ENCODE measurements at regions of chr15 and their contacts with region 1.

Region 1: DNA sequence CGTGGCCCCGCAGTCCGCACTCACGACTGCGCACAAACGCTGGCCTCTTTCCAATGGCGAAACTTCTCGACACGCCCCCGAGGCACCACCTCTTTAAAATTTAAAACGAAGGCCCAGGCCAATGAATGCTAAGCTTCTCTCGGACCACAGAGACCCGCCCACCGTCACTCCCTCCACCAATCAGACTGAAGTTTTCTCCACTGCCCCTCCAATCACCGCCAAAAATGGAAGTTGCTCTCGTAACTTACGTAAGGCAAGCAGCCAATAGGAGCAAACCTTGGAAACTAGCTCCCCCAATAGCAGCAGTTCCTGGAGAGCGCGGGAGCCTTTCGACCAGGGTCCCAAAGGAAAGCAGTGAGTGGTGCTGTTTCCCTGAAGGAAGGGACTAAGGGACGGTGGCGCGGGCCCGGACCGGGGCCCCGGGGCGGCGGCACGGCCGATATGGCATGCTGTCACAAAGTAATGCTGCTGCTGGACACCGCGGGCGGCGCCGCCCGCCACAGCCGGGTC is at the start of gene TICRR:
- DNase-seq: peak; percentile 86 to 98 (median 91)
- ATAC-seq: peak; percentile 98
- H3K4me3 ChIP-seq: peak within 1 kb of the TSS; percentile 68
- H3K4me3 Mint-ChIP-seq: peak within 1 kb of the TSS; percentile 91
- H3K27ac ChIP-seq: no peak within 1 kb of the TSS
- H3K27ac Mint-ChIP-seq: peak within 1 kb of the TSS; percentile 43
- H3K4me1 ChIP-seq: peaks cover 17% of the 10 kb centered on the region
- H3K4me1 Mint-ChIP-seq: peaks cover 5% of the 10 kb centered on the region
- H3K27me3 ChIP-seq: no peaks in the 10 kb centered on the region
- H3K27me3 Mint-ChIP-seq: peaks cover 11% of the 10 kb centered on the region
- CTCF ChIP-seq: no peak
- total RNA-seq, gene TICRR: 0.05 to 0.06 TPM

Region 2: DNA sequence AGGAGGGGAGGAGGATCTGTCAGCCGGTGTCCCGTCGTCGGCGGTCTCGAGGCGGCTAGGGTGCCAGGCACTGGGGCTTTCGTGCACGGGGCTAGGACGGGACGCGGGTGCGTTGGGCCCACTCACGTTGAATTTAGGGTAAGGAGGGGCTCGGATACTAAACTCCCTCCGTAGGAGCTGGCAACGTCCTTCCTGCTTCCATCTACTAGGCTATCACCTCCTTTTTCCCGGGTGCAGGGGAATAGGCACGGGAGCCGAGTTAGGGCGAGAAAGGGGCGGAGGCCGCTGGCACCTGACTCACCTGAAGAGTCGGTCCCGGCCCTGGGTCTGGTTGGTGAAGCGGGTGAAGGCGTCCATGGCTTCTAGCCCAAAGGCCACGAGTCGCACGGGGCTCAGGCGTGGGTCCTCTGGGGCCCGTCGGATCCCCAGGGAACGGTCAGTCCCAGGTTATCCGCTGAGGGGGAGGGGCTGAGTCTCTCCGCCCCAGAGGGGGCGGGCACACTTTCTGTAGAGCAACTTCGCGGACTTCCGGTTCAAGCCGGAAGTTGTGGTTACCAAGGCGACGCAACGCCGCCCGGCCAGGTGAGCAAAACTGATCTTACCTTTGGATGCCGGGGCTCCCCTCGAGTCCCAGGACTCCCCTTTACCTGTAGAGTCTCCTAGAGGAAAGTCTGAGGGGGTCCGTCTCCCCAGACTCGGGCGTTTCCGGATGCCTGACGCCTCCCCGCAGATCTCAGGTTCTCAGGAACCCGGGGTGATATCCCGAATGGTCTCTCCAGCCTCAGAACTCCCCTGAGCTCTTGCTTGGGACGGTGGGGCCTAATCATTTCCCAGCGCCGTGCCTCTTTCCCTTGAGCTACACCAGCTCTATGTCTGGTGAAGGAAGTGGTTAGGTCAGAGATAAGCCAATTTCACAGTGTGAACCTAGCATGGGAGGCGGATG is 115.3 kb after region 1 on chr15 and contains the starts of genes PEX11A and WDR93:
- CTCF ChIA-PET with region 1: no interaction called
- POLR2A ChIA-PET with region 1: no interaction called
- intact Hi-C with region 1: loop called in 1 of 2 experiments (anchors 5 kb)
- DNase-seq: peak; percentile 58 to 89 (median 71)
- ATAC-seq: peak; percentile 82
- H3K4me3 ChIP-seq: peak within 1 kb of the TSS; percentile 98
- H3K4me3 Mint-ChIP-seq: peak within 1 kb of the TSS; percentile 90
- H3K27ac ChIP-seq: peak within 1 kb of the TSS in 1 of 2 donors; percentile 63
- H3K27ac Mint-ChIP-seq: peak within 1 kb of the TSS; percentile 73
- H3K4me1 ChIP-seq: peaks cover 17% of the 10 kb centered on the region
- H3K4me1 Mint-ChIP-seq: peaks cover 6% of the 10 kb centered on the region
- H3K27me3 ChIP-seq: no peaks in the 10 kb centered on the region
- H3K27me3 Mint-ChIP-seq: peaks cover 5% of the 10 kb centered on the region
- CTCF ChIP-seq: no peak
- total RNA-seq, gene PEX11A: 0.22 TPM
- total RNA-seq, gene WDR93: not detected

Region 3: DNA sequence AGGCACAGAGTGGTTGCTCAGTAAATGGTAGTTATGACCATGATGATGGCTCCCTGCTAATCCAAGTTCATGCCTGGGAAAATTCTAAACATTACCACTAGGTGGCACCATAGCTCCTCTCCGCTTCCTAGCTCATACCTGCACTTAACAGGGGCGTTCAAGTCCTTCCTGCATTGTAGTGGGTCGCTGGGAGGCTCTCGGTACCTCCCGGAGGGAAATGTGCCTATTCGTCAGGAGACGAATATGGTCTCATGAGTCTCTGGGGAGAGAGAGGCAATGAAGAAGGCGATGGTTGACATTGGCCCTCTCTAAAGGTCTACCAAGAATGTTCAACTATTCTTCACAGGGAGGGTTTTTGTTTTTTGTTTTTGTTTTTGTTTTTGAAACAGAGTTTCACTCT is 164.9 kb after region 1 on chr15:
- CTCF ChIA-PET with region 1: no interaction called
- POLR2A ChIA-PET with region 1: no interaction called
- intact Hi-C with region 1: no loop called
- DNase-seq: peak in 13 of 14 experiments; percentile 15 to 82 (median 44)
- ATAC-seq: peak; percentile 86
- H3K4me3 ChIP-seq: no peak overlapping the region
- H3K4me3 Mint-ChIP-seq: no peak overlapping the region
- H3K27ac ChIP-seq: no peak overlapping the region
- H3K27ac Mint-ChIP-seq: no peak overlapping the region
- H3K4me1 ChIP-seq: peaks cover 3% of the 10 kb centered on the region
- H3K4me1 Mint-ChIP-seq: no peaks in the 10 kb centered on the region
- H3K27me3 ChIP-seq: peaks cover 0 to 6% of the 10 kb centered on the region in 2 experiments
- H3K27me3 Mint-ChIP-seq: peaks cover 5% of the 10 kb centered on the region
- CTCF ChIP-seq: peak; percentile 91

Region 4: GRCh38 chr15:89781891-89782618 is 206.9 kb after region 1 on chr15:
- CTCF ChIA-PET with region 1: no interaction called
- POLR2A ChIA-PET with region 1: no interaction called
- intact Hi-C with region 1: no loop called
- DNase-seq: peak in 2 of 14 experiments; percentile 41 to 53
- ATAC-seq: no peak
- H3K4me3 ChIP-seq: no peak overlapping the region
- H3K4me3 Mint-ChIP-seq: no peak overlapping the region
- H3K27ac ChIP-seq: no peak overlapping the region
- H3K27ac Mint-ChIP-seq: no peak overlapping the region
- H3K4me1 ChIP-seq: peaks cover 13% of the 10 kb centered on the region
- H3K4me1 Mint-ChIP-seq: no peaks in the 10 kb centered on the region
- H3K27me3 ChIP-seq: peaks cover 5 to 9% of the 10 kb centered on the region in 2 experiments
- H3K27me3 Mint-ChIP-seq: peaks cover 35% of the 10 kb centered on the region
- CTCF ChIP-seq: no peak